OCI-LY7 (cell line): ENCODE measurements at regions of chr1 and their contacts with region 1.

Region 1: GRCh38 chr1:93437976-93438605 is 9.8 kb upstream of the FNBP1L start:
- DNase-seq: peak; percentile 53
- H3K4me3 ChIP-seq: no peak overlapping the region
- H3K27ac ChIP-seq: no peak overlapping the region
- H3K4me1 ChIP-seq: no peaks in the 10 kb centered on the region
- CTCF ChIP-seq: peak; percentile 89

Region 2: GRCh38 chr1:93304716-93305138 is 133.4 kb before region 1 on chr1:
- CTCF ChIA-PET with region 1: interaction called, 3 read pairs
- POLR2A ChIA-PET with region 1: no interaction called
- intact Hi-C with region 1: loop called (anchors 10 kb)
- DNase-seq: peak; percentile 78
- H3K4me3 ChIP-seq: no peak overlapping the region
- H3K27ac ChIP-seq: no peak overlapping the region
- H3K4me1 ChIP-seq: no peaks in the 10 kb centered on the region
- CTCF ChIP-seq: peak; percentile 98

Region 3: GRCh38 chr1:93814059-93814794 is 376.1 kb after region 1 on chr1:
- CTCF ChIA-PET with region 1: interaction called, 3 read pairs
- POLR2A ChIA-PET with region 1: no interaction called
- intact Hi-C with region 1: loop called (anchors 10 kb)
- DNase-seq: peak; percentile 85
- H3K4me3 ChIP-seq: no peak overlapping the region
- H3K27ac ChIP-seq: no peak overlapping the region
- H3K4me1 ChIP-seq: peaks cover 33% of the 10 kb centered on the region
- CTCF ChIP-seq: peak; percentile 100